ENCODE measurements at regions of chr17 and their contacts with region 1.

Region 1: DNA sequence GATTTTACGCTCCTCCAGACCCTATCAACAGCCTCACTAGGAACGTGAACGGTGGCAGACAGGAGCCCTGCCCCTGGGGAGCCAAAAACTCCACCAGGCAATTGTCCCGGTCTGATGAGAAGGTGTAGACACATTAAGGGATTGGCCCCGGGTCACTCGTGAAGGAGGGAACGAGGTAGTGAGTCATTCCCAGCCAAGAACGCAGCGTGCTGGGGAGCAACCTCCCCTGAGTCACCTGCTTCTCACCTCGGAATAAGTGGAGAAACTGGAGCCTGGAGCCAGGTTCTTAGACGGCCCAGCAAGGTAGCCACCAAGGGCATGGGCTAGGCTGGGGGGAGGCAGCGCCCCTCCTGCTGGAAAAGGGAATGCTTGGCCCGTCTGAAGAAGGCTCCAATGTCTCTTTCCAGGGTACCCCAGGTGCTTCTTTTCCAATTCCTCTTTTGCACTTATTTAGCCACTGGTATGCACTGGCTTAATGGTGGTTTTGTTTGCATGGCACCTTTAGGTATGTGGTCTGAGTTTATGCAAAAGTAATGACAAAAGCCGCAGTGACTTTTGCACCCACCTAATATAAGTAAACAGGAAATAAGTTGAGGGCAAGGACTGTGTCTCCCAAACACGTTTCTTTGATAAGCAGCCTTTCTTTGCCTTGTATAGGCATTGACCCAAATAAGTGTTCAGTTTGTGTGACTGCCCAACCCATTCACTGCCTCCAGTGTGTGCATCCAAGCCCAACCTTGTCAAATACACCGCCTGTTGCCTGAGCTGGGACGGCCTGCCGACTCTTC is 1.8 kb upstream of the HELZ start:
- DNase-seq: peak; percentile 79
- ATAC-seq: peak; percentile 51
- H3K4me3 Mint-ChIP-seq: peak overlapping the region; percentile 79
- H3K27ac Mint-ChIP-seq: peak overlapping the region; percentile 93
- H3K4me1 Mint-ChIP-seq: peaks cover 38% of the 10 kb centered on the region
- H3K27me3 Mint-ChIP-seq: no peaks in the 10 kb centered on the region

Region 2: GRCh38 chr17:67232441-67232840 is 14.4 kb before region 1 on chr17:
- CTCF ChIA-PET with region 1: no interaction called
- DNase-seq: no peak
- ATAC-seq: no peak
- H3K4me3 Mint-ChIP-seq: no peak overlapping the region
- H3K27ac Mint-ChIP-seq: no peak overlapping the region
- H3K4me1 Mint-ChIP-seq: peaks cover 6% of the 10 kb centered on the region
- H3K27me3 Mint-ChIP-seq: no peaks in the 10 kb centered on the region

Region 3: GRCh38 chr17:67258821-67259468 is 12.1 kb after region 1 on chr17:
- CTCF ChIA-PET with region 1: interaction called, 11 read pairs
- DNase-seq: peak; percentile 83
- ATAC-seq: peak; percentile 61
- H3K4me3 Mint-ChIP-seq: peak overlapping the region; percentile 53
- H3K27ac Mint-ChIP-seq: peak overlapping the region; percentile 84
- H3K4me1 Mint-ChIP-seq: peaks cover 48% of the 10 kb centered on the region
- H3K27me3 Mint-ChIP-seq: no peaks in the 10 kb centered on the region